Activated naive CD4-positive, alpha-beta T cell treated with anti-CD3 and anti-CD28 coated beads for 36 hours (primary cell): ENCODE measurements at regions of chr11 and their contacts with region 1.

Region 1: DNA sequence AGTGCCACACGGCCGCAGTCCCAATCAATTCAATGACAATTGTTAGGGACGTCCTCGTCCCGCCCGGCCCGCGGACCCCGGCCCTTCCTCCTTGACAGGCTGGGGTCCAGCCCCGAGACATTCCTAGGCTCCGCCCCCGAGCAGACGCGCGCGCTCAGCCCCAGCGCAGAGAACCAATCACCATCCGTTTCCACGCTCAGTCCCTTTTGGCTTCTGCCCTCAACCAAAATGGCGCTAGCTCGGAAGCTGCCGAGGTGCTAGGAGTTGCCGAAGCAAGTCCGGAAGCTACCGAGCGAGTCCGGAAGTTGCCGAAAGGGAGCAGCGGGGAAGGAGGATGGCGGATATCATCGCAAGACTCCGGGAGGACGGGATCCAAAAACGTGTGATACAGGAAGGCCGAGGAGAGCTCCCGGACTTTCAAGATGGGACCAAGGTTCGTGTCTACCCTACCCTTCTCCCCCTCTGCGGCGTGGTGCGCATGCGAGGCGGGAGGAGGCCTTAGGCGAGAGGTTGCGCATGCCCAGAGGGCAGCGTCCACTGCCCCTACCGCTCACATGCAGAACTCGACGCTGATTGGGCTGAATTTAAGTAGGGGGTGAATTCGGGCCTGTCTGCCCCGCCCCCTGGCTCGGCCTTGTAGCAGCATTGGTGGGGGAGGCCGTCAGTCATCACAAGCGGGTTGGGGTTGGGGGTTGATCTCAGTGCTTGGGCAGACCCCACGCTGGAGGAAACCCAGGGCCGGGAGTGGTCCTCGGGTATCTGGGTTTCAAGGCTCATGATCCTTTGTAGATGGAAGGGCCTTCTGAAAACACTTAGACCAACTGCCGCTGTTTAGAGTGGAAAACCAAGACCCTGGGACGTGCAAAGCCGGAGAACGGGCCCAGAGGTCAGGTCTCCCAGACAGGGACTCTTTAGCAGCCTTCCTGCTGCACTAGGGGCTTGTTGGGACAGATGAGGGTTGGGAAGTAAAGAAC is at the start of gene AIP:
- DNase-seq: peak; percentile 99
- H3K4me3 Mint-ChIP-seq: peak within 1 kb of the TSS; percentile 94
- H3K27ac Mint-ChIP-seq: peak within 1 kb of the TSS; percentile 99
- H3K4me1 Mint-ChIP-seq: peaks cover 34% of the 10 kb centered on the region
- H3K27me3 Mint-ChIP-seq: no peaks in the 10 kb centered on the region
- total RNA-seq, gene AIP: 163 to 166 TPM

Region 2: DNA sequence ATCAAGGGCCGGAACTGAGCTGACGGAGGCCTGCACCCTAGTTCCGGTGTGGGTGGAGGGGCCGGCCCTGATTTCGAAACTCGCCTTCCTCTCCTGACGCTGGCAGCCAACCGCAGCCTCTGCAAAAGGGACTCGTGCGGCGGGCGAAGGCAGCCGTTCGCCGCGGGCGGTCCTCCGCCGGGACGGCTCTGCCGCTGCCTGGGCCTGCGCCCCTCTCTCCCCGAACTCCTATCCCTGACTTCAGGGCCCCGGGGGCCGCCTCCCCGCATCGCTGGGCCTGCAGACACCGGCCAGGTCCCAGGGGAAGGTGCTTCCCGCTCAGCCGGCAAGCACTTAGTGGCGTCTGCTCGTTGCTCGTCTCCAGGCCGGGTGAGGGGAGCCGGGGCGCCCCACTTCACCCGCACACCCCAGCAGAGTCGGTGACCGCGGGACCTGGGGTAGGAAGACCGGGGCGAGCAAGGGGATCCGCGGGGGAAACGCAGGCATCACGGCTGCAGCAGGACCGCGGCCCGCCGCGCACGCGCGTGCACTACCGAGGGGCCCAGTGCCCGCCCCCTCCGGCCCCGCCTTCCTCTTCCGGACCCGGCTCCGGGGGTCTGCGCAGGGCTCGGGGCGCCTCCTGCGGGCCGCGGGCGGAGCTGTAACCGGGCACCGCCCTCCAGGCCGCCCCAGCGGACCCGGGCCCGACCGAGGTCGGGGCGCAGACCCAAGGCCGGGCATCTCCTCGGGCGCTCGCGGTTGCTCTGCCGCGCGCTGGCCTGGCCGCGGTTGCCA is 194.5 kb before region 1 on chr11:
- CTCF ChIA-PET with region 1: no interaction called
- intact Hi-C with region 1: loop called (anchors 5 kb)
- DNase-seq: peak; percentile 95
- H3K4me3 Mint-ChIP-seq: peak overlapping the region; percentile 71
- H3K27ac Mint-ChIP-seq: peak overlapping the region; percentile 96
- H3K4me1 Mint-ChIP-seq: peaks cover 47% of the 10 kb centered on the region
- H3K27me3 Mint-ChIP-seq: no peaks in the 10 kb centered on the region

Region 3: GRCh38 chr11:67447848-67448609 is 35.1 kb before region 1 on chr11:
- CTCF ChIA-PET with region 1: interaction called, 3 read pairs
- intact Hi-C with region 1: loop called (anchors 2 kb)
- DNase-seq: no peak
- H3K4me3 Mint-ChIP-seq: no peak overlapping the region
- H3K27ac Mint-ChIP-seq: peak overlapping the region; percentile 41
- H3K4me1 Mint-ChIP-seq: peaks cover 63% of the 10 kb centered on the region
- H3K27me3 Mint-ChIP-seq: no peaks in the 10 kb centered on the region